ENCODE measurements at regions of chr17 and their contacts with region 1.

Region 1: DNA sequence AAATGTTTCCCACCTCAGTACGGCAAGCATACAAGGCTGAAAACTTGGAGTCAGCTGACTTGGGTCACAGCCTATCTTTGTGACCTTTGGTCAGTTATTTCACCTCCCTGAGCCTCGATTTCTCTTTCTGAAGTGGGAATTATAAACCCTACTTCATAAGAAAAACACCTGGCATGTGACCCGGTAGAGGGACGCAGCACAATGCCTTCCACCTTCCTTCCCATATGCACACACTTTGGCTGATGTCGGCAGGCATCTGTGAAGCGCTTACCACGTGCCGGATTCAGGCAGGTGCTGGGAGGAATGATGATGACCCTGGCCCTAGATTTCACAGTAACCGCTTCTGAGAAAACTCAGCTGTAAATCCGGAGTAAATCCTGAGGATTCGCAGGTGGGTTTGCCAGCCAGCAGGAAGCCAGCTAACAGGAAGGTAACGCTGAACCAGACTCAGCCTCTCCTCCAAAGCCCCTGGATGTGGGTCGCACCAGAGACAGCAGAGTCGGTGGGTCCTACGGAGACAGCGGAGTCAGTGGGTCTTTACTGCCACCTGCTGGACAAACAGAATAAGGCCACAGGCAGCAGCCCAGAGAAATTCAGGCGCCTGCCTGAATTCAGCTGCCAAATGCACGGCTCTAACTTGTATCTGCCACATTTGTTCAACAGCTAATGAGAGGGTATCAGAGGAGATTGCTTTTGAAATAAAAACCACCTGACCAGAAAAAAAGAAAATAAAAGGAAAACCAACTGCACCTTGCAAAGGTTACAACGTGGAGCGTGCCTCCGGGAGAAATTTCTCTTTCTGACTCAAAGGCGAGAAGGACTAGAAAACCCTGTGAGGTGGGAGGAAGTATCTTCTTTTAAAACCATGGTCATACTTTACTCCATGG is 16.6 kb downstream of the COPRS start:
- DNase-seq: peak; percentile 57 to 76
- ATAC-seq: peak; percentile 86 to 96 (median 90)
- H3K4me3 ChIP-seq: peak overlapping the region; percentile 37
- H3K27ac ChIP-seq: no peak overlapping the region
- H3K4me1 ChIP-seq: peaks cover 16% of the 10 kb centered on the region
- H3K27me3 ChIP-seq: no peaks in the 10 kb centered on the region
- CTCF ChIP-seq: peak; percentile 97

Region 2: GRCh38 chr17:31437720-31438420 is 404.6 kb before region 1 on chr17:
- intact Hi-C with region 1: loop called (anchors 2 to 5 kb)
- DNase-seq: peak in 1 of 2 donors; percentile 39
- ATAC-seq: peak in 3 of 4 donors; percentile 11 to 22 (median 19)
- H3K4me3 ChIP-seq: no peak overlapping the region
- H3K27ac ChIP-seq: no peak overlapping the region
- H3K4me1 ChIP-seq: no peaks in the 10 kb centered on the region
- H3K27me3 ChIP-seq: no peaks in the 10 kb centered on the region
- CTCF ChIP-seq: no peak

Region 3: GRCh38 chr17:31558748-31559644 is 283.4 kb before region 1 on chr17:
- intact Hi-C with region 1: loop called (anchors 1 to 2 kb)
- DNase-seq: peak; percentile 83 to 90
- ATAC-seq: peak; percentile 89 to 95 (median 93)
- H3K4me3 ChIP-seq: peak overlapping the region; percentile 76
- H3K27ac ChIP-seq: peak overlapping the region; percentile 80
- H3K4me1 ChIP-seq: peaks cover 4% of the 10 kb centered on the region
- H3K27me3 ChIP-seq: peaks cover 0 to 7% (median 2%) of the 10 kb centered on the region in 3 donors
- CTCF ChIP-seq: peak; percentile 95

Region 4: GRCh38 chr17:31696184-31696602 is 146.2 kb before region 1 on chr17:
- intact Hi-C with region 1: loop called in 1 of 2 experiments (anchors 10 kb)
- DNase-seq: peak; percentile 84 to 92
- ATAC-seq: peak; percentile 92 to 97 (median 94)
- H3K4me3 ChIP-seq: no peak overlapping the region
- H3K27ac ChIP-seq: no peak overlapping the region
- H3K4me1 ChIP-seq: peaks cover 6% of the 10 kb centered on the region
- H3K27me3 ChIP-seq: no peaks in the 10 kb centered on the region
- CTCF ChIP-seq: peak; percentile 13

Measured in psoas muscle (tissue), 8 donors.